Psoas muscle (tissue), 8 donors: ENCODE measurements at regions of chr2 and their contacts with region 1.

Region 1: DNA sequence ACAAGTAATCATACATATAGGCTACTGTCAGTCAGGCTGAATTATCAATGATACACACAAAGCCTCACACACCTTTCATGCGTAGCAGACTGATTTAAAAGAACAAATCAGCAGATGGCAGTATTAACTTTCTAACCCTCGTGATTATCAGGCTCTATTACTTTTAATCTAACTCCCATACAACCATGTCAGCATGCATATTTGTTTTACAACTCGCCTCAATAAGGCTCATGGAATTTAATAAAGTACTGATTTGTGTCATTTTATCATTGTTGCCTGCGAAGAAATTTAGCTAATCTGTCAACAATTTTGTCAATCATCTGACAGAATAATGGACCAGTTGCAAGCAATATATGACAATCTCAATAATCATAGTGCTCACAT is 82.8 kb downstream of the SLC25A12 start:
- DNase-seq: no peak
- ATAC-seq: peak in 3 of 4 donors; percentile 43 to 70 (median 47)
- H3K4me3 ChIP-seq: no peak overlapping the region
- H3K27ac ChIP-seq: no peak overlapping the region
- H3K4me1 ChIP-seq: peaks cover 11% of the 10 kb centered on the region
- H3K27me3 ChIP-seq: no peaks in the 10 kb centered on the region
- CTCF ChIP-seq: peak; percentile 30

Region 2: DNA sequence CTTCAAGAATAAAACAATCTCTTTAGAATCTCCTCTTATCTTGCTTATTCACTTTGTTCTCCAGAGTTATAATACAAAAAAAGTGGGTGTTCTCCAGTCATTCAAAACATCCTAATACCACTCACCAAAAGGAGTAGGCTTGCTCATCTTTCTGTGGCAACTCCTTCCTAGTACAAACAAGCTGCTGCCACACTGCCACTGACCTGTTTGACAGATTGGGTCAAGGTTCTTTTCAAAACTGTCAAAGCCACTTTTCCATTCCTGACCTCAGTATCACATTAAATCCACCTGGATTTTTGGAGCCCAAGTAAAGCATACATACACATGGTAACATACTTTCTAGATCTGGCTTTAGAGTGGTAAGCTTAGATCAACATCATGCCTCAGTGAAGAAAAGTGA is 23.0 kb after region 1 on chr2:
- intact Hi-C with region 1: no loop called
- DNase-seq: no peak
- ATAC-seq: no peak
- H3K4me3 ChIP-seq: no peak overlapping the region
- H3K27ac ChIP-seq: no peak overlapping the region
- H3K4me1 ChIP-seq: peaks cover 15% of the 10 kb centered on the region
- H3K27me3 ChIP-seq: no peaks in the 10 kb centered on the region
- CTCF ChIP-seq: no peak

Region 3: GRCh38 chr2:172113617-172114016 is 302.4 kb after region 1 on chr2:
- intact Hi-C with region 1: loop called in 1 of 2 experiments (anchors 10 kb)
- DNase-seq: no peak
- ATAC-seq: peak in 1 of 4 donors; percentile 72
- H3K4me3 ChIP-seq: no peak overlapping the region
- H3K27ac ChIP-seq: no peak overlapping the region
- H3K4me1 ChIP-seq: no peaks in the 10 kb centered on the region
- H3K27me3 ChIP-seq: peaks cover 0 to 11% (median 5%) of the 10 kb centered on the region in 3 donors
- CTCF ChIP-seq: peak; percentile 39